Activated B cell treated with CpG ODN at 0.5 μM for 24 hours (primary cell): ENCODE measurements at regions of chr1 and their contacts with region 1.

Region 1: GRCh38 chr1:98053471-98054366 is 132.9 kb upstream of the DPYD start:
- DNase-seq: peak; percentile 53
- ATAC-seq: peak; percentile 92
- H3K4me3 Mint-ChIP-seq: peak overlapping the region; percentile 67
- H3K27ac Mint-ChIP-seq: no peak overlapping the region
- H3K4me1 Mint-ChIP-seq: peaks cover 13% of the 10 kb centered on the region
- H3K27me3 Mint-ChIP-seq: peaks cover 54% of the 10 kb centered on the region
- CTCF ChIP-seq: peak; percentile 77

Region 2: DNA sequence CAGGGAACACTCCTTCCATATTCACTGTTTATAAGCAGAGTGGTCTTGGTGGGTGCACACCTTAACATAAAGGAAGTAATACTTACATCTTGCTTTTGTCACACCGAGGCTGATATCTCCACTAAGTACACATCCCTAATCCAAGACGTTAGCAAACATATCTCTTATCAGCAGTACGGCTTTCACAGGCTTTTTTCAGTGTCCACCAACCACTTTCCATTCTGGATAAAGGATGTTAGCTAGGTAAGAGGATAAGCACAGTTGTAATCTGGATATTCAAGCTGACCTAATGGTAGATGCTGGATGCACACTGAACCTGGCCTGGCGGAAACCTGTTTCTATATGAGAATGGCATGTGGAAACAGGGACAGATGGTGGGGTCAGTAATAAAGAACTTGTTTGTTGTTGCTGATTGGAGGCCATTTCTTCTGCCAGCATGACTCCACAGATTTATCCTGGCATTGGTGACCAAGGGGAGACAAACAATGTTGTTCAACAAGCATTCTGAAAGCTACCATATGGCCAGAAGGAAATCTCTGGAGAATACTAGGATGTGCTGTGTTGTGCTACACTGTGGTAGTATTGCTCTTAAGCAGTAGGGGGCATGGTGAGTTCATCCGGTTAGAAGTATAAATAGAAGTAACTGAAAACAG is 915.7 kb before region 1 on chr1:
- CTCF ChIA-PET with region 1: interaction called, 15 read pairs
- POLR2A ChIA-PET with region 1: no interaction called
- intact Hi-C with region 1: loop called (anchors 1 kb)
- DNase-seq: no peak
- ATAC-seq: peak; percentile 79
- H3K4me3 Mint-ChIP-seq: peak overlapping the region; percentile 42
- H3K27ac Mint-ChIP-seq: no peak overlapping the region
- H3K4me1 Mint-ChIP-seq: peaks cover 8% of the 10 kb centered on the region
- H3K27me3 Mint-ChIP-seq: no peaks in the 10 kb centered on the region
- CTCF ChIP-seq: no peak

Region 3: DNA sequence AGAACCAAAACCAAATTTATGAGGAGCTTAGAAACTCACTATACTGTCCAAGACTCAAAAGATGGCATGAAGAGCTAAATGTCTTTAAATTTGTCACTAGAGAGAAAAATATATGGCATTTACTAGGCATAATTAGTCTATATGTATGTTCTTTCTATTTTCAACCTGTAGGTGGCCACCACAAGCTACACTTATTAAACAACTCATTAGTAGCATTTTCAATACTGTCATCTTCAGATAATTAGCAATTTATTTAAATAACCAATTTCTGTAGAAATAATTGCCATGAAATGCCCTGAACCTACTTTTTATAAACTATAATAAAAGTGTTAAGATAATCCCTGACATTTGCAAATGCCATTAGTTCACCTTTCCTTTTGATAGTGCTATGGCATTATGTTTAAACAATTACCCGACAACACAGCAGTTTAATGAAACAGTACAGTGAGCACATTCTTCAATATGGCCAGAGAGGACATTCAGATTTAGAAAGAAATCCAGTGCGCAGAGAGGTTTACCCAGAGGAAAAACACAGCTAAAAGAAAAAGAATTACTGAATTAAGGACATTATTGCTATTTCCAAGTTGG is 809.7 kb before region 1 on chr1:
- CTCF ChIA-PET with region 1: interaction called, 3 read pairs
- POLR2A ChIA-PET with region 1: no interaction called
- intact Hi-C with region 1: loop called (anchors 1 kb)
- DNase-seq: no peak
- ATAC-seq: no peak
- H3K4me3 Mint-ChIP-seq: no peak overlapping the region
- H3K27ac Mint-ChIP-seq: no peak overlapping the region
- H3K4me1 Mint-ChIP-seq: no peaks in the 10 kb centered on the region
- H3K27me3 Mint-ChIP-seq: no peaks in the 10 kb centered on the region
- CTCF ChIP-seq: no peak

Region 4: GRCh38 chr1:97820470-97821188 is 233.1 kb before region 1 on chr1:
- CTCF ChIA-PET with region 1: no interaction called
- POLR2A ChIA-PET with region 1: no interaction called
- intact Hi-C with region 1: loop called (anchors 2 kb)
- DNase-seq: no peak
- ATAC-seq: no peak
- H3K4me3 Mint-ChIP-seq: no peak overlapping the region
- H3K27ac Mint-ChIP-seq: no peak overlapping the region
- H3K4me1 Mint-ChIP-seq: no peaks in the 10 kb centered on the region
- H3K27me3 Mint-ChIP-seq: no peaks in the 10 kb centered on the region
- CTCF ChIP-seq: no peak

Region 5: DNA sequence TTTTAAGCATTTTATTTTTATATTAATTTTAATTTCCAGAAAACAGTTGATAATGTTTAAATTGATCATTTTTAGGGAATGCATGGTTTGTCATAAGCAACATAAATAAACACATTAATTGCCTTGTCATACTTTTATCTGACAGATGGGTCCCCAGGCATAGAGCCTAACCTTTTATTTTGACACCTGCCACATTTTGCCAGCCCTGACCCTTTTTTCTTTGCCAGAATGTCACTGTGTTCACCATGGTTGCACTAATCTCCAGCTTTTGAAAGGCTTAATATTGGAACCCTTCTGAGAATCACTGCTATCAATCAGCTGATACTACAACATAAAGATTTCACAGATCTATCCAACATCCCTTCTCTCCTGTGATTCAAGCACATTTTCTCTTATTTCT is 76.9 kb before region 1 on chr1:
- CTCF ChIA-PET with region 1: no interaction called
- POLR2A ChIA-PET with region 1: no interaction called
- intact Hi-C with region 1: no loop called
- DNase-seq: no peak
- ATAC-seq: no peak
- H3K4me3 Mint-ChIP-seq: no peak overlapping the region
- H3K27ac Mint-ChIP-seq: no peak overlapping the region
- H3K4me1 Mint-ChIP-seq: no peaks in the 10 kb centered on the region
- H3K27me3 Mint-ChIP-seq: no peaks in the 10 kb centered on the region
- CTCF ChIP-seq: no peak